Endothelial cell of umbilical vein (primary cell): ENCODE measurements at regions of chr15 and their contacts with region 1.

Region 1: GRCh38 chr15:64731012-64731806 is 44.2 kb downstream of the RBPMS2 start:
- DNase-seq: peak; percentile 67
- H3K4me3 ChIP-seq: no peak overlapping the region
- H3K27ac ChIP-seq: no peak overlapping the region
- H3K4me1 ChIP-seq: no peaks in the 10 kb centered on the region
- H3K27me3 ChIP-seq: no peaks in the 10 kb centered on the region
- CTCF ChIP-seq: peak; percentile 84 to 87
- POLR2A ChIP-seq: no peak

Region 2: GRCh38 chr15:64681424-64682024 is 49.7 kb before region 1 on chr15:
- CTCF ChIA-PET with region 1: interaction called, 446 read pairs
- POLR2A ChIA-PET with region 1: no interaction called
- dilution Hi-C with region 1: no loop called
- intact Hi-C with region 1: loop called (anchors 1 kb)
- DNase-seq: peak; percentile 70
- H3K4me3 ChIP-seq: no peak overlapping the region
- H3K27ac ChIP-seq: no peak overlapping the region
- H3K4me1 ChIP-seq: no peaks in the 10 kb centered on the region
- H3K27me3 ChIP-seq: no peaks in the 10 kb centered on the region
- CTCF ChIP-seq: peak; percentile 62 to 72
- POLR2A ChIP-seq: no peak

Region 3: DNA sequence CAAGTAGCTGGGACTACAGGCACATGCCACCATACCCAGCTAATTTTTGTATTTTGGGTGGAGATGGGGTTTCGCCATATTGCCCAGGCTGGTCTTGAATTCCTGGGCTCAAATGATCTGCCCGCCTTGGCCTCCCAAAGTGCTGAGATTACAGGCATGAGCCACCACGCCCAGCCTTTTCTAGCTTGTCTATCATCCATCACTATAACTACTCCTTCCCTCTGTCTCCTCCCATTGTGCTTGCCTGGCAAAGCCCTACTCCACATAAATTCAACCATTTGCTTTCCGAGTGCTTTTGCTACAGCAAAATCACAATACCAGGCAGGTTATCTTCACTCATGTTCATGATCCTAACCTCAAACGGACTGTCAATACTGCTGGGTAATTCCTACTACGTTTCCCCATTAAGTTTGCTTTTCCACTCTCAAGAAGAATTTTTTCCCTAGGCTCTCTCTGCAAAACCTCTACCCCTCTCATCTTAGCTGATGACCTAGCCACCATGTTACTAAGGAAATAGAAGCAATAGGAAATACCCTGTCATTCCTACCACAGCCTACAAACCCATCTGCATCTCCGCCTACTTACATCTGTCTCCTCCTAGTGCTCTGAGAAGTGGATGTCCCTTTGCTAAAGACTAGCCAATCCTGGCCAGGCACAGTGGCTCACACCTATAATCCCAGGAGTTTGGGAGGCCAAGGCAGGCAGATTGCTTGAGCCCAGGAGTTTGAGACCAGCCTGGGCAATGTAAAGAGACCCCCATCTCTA is 20.4 kb before region 1 on chr15:
- CTCF ChIA-PET with region 1: interaction called, 36 read pairs
- POLR2A ChIA-PET with region 1: no interaction called
- dilution Hi-C with region 1: no loop called
- intact Hi-C with region 1: no loop called
- DNase-seq: no peak
- H3K4me3 ChIP-seq: no peak overlapping the region
- H3K27ac ChIP-seq: no peak overlapping the region
- H3K4me1 ChIP-seq: no peaks in the 10 kb centered on the region
- H3K27me3 ChIP-seq: no peaks in the 10 kb centered on the region
- CTCF ChIP-seq: no peak
- POLR2A ChIP-seq: no peak

Region 4: DNA sequence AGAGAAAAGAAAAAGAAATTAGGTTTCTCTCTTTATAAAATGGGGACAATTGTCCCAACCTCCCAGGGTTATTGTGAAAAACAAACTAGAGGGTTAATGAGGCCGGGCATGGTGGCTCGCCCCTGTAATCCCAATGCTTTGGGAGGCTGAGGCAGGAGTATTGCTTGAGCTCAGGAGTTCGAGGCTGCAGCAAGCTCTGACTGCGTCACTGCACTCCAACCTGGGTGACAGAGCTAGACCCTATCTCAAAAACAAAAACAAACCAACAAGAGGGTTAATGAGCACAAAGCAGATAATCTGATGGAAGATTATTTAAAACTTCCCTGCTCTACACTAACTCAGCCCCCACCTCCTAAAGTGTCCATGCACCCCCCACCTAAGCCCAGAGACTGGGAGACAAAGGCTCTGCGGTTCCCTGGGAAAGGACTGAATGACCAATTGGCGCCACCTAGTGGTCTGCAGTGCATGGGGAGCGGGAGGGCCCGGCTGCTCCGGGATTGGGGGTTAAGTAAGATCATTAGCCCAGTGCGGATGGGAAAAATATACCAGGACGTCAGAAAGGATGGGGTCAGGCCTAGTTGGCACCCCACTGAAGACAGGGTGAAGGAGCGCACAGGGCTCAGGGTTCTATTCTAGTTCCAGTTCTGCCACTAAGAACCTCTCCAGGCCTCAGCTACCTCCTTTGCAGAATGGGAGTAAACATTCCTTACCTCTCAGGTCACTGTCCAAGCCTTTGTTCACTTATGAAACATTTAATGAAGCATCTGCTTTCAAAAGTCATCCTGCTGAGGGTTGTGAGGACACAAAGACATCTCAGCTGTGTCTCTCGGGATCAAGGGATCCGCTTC is 78.7 kb after region 1 on chr15:
- CTCF ChIA-PET with region 1: interaction called, 222 read pairs
- POLR2A ChIA-PET with region 1: no interaction called
- dilution Hi-C with region 1: no loop called
- intact Hi-C with region 1: loop called (anchors 1 kb)
- DNase-seq: peak; percentile 67
- H3K4me3 ChIP-seq: no peak overlapping the region
- H3K27ac ChIP-seq: no peak overlapping the region
- H3K4me1 ChIP-seq: no peaks in the 10 kb centered on the region
- H3K27me3 ChIP-seq: peaks cover 0 to 6% of the 10 kb centered on the region in 2 experiments
- CTCF ChIP-seq: peak; percentile 94 to 97
- POLR2A ChIP-seq: no peak

Region 5: DNA sequence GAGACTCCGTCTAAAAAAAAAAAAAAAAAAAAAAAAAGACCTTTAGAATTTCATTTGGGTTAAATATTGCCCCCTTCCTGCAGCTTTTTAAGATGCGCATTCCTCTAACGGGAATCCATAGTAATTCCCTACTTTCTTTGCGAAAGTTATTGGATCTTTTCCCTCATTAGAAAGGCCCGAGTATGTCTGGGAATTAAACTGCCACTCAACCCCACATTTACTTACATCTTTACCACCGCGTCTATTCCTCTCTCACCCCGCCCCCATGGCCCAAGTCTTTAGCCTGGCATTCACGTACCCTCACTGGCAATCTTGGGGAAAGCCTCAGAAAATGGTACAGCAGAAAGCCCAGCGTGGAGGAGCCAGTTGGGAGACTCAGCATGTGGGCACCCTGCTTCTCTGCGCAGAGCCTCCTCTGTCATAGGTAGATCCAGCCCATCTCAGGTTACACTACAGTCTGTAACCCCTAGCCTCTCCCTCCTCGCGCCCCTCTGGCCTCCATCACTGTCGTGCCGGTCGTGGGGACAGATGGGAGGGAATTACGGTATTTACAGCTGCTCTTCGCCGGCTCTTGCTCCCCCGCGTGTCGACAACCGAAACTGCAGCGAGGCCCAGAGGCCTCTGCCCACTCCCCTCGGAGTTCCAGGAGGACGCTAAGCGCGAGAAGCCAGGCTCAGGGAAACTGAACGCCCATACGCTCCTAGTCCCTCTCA is 174.1 kb after region 1 on chr15:
- CTCF ChIA-PET with region 1: interaction called, 27 read pairs
- POLR2A ChIA-PET with region 1: no interaction called
- dilution Hi-C with region 1: no loop called
- intact Hi-C with region 1: loop called (anchors 1 kb)
- DNase-seq: peak; percentile 79
- H3K4me3 ChIP-seq: peak overlapping the region; percentile 21 to 48 (median 35)
- H3K27ac ChIP-seq: no peak overlapping the region
- H3K4me1 ChIP-seq: peaks cover 11% of the 10 kb centered on the region
- H3K27me3 ChIP-seq: no peaks in the 10 kb centered on the region
- CTCF ChIP-seq: peak; percentile 89 to 92
- POLR2A ChIP-seq: no peak

Region 6: DNA sequence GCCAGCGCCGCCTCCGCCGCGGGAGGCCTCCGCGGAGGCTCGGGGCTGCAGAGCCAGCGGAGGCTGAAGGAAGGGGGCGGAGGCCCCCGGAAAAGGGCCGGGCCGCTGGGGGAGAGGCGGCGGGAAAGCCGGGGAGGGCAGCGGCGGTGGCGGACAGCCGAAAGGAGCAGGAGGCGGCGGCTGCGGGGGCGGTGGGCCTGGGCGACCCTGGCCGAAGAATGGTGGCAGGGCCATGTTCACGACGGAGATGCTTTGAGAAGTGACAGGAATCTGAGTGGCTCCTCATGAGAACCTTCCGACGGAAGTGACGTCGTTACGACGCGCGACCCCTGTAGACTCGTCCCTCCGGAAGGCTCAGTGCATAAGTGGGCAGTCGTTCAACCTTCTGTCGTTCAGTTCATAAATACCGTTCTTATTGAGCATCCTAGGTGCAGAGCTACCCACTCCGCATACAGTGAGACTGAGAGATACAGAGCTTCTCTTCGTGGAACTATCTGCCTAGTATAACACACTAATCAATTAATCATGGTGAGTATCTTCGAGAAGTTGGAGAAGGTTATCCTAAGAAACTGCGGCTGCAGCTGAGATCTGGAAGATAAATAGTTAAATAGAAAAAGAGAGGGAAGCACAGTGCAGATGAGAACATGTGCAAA is 402.5 kb after region 1 on chr15 and contains the start of gene PDCD7:
- CTCF ChIA-PET with region 1: no interaction called
- POLR2A ChIA-PET with region 1: no interaction called
- dilution Hi-C with region 1: no loop called
- intact Hi-C with region 1: loop called (anchors 1 kb)
- DNase-seq: peak; percentile 89
- H3K4me3 ChIP-seq: peak within 1 kb of the TSS; percentile 29 to 94 (median 72)
- H3K27ac ChIP-seq: peak within 1 kb of the TSS; percentile 46
- H3K4me1 ChIP-seq: peaks cover 10% of the 10 kb centered on the region
- H3K27me3 ChIP-seq: no peaks in the 10 kb centered on the region
- CTCF ChIP-seq: no peak
- POLR2A ChIP-seq: peak; percentile 91
- total RNA-seq, gene PDCD7: 19.5 and 26.6 TPM in 2 replicates